Activated naive CD4-positive, alpha-beta T cell treated with anti-CD3 and anti-CD28 coated beads for 36 hours (primary cell): ENCODE measurements at regions of chr3 and their contacts with region 1.

Region 1: DNA sequence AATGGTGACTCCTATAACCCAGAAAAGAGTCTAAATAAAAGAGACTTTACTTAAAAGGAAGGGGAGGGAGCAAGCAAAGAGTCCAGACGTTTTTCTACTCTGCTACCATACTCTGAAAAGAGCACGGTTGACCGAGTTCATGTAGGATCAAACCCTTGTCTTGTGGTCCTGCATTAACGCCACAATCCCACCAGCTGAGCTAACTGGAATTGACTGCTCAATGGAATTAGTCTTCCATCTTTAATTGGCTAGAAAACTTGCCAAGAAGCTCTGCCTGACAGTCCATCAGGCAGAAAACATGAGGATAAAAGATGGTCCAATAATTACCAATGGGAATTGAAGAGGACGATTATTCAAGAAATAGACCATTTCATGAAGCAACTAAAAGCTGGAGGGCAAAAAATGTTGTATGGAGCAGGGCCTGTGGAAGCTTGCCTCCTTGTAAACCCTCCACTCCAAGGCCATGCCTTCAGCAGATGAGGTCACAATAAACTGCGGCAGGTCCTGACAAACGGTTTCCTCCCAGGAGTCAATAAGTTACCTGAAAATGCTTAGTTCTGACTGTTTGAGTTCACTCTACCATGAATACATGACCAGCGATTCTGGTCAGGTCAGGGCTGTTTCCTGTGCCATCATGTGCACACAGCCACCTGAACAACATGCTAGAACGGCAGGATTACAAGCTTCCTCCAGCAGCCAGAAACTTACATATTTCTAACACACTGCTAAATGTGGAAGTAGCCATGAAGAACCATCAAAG is 35.6 kb upstream of the ARHGEF3 start:
- DNase-seq: peak; percentile 51
- H3K4me3 Mint-ChIP-seq: no peak overlapping the region
- H3K27ac Mint-ChIP-seq: no peak overlapping the region
- H3K4me1 Mint-ChIP-seq: peaks cover 49% of the 10 kb centered on the region
- H3K27me3 Mint-ChIP-seq: no peaks in the 10 kb centered on the region

Region 2: GRCh38 chr3:56758539-56758981 is 78.8 kb before region 1 on chr3:
- CTCF ChIA-PET with region 1: no interaction called
- intact Hi-C with region 1: no loop called
- DNase-seq: peak; percentile 65
- H3K4me3 Mint-ChIP-seq: peak overlapping the region; percentile 55
- H3K27ac Mint-ChIP-seq: peak overlapping the region; percentile 85
- H3K4me1 Mint-ChIP-seq: peaks cover 82% of the 10 kb centered on the region
- H3K27me3 Mint-ChIP-seq: no peaks in the 10 kb centered on the region

Region 3: GRCh38 chr3:56825567-56826438 is 11.6 kb before region 1 on chr3:
- CTCF ChIA-PET with region 1: interaction called, 3 read pairs
- intact Hi-C with region 1: loop called (anchors 2 kb)
- DNase-seq: no peak
- H3K4me3 Mint-ChIP-seq: no peak overlapping the region
- H3K27ac Mint-ChIP-seq: no peak overlapping the region
- H3K4me1 Mint-ChIP-seq: peaks cover 45% of the 10 kb centered on the region
- H3K27me3 Mint-ChIP-seq: no peaks in the 10 kb centered on the region